ENCODE measurements at regions of chr19 and their contacts with region 1.

Region 1: DNA sequence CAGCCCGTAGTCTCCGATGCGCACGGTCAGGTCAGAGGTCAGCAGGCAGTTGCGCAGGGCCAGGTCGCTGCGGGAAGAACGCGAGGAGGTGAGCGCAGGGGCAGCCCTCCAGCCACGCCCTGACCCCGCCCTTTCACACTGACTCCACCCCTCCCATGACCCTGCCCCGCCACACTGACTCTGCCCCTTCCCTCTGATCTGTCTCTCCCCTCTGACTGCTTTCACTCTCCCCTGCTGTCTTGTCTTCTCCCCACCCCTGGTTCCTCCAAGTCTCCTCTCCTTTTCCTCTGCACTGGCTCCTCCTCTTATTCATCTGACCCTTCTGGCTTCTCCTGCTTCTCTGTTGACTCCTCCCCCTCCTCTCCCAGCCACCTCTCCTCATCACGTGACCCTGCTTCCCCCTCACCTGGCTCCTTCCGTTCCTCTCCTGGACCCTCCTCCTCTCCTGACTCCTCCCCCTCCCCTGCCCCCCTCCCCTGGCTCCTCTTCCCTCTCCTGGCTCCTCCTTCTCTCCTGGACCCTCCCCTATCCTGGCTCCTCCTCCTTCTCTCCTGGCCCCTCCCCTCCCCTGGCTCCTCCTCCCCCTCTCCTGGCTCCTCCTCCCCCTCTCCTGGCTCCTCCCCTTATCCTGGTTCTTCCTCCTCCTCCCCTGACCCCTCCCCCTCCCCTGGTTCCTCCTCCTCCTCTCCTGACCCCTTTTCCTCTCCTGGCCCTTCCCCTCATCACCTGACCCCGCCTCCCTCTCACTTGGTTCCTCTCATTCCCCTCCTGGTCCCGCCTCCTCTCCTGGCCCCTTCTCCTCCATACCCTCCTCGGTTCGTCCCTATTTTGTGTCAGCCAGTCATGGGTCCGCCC is 9.9 kb downstream of the LMTK3 start:
- DNase-seq: no peak
- ATAC-seq: peak; percentile 64
- H3K4me3 Mint-ChIP-seq: peak overlapping the region; percentile 65
- H3K27ac Mint-ChIP-seq: no peak overlapping the region
- H3K4me1 Mint-ChIP-seq: peaks cover 24% of the 10 kb centered on the region
- H3K27me3 Mint-ChIP-seq: peaks cover 15% of the 10 kb centered on the region
- CTCF ChIP-seq: no peak

Region 2: GRCh38 chr19:48513289-48514122 is 11.8 kb after region 1 on chr19:
- CTCF ChIA-PET with region 1: no interaction called
- POLR2A ChIA-PET with region 1: interaction called, 3 read pairs
- intact Hi-C with region 1: loop called (anchors 1 kb)
- DNase-seq: peak; percentile 51
- ATAC-seq: peak; percentile 90
- H3K4me3 Mint-ChIP-seq: no peak overlapping the region
- H3K27ac Mint-ChIP-seq: peak overlapping the region; percentile 69
- H3K4me1 Mint-ChIP-seq: peaks cover 17% of the 10 kb centered on the region
- H3K27me3 Mint-ChIP-seq: peaks cover 2% of the 10 kb centered on the region
- CTCF ChIP-seq: no peak

Region 3: GRCh38 chr19:48582168-48582567 is 80.4 kb after region 1 on chr19:
- CTCF ChIA-PET with region 1: interaction called, 24 read pairs
- POLR2A ChIA-PET with region 1: interaction called, 3 read pairs
- intact Hi-C with region 1: loop called (anchors 1 kb)
- DNase-seq: no peak
- ATAC-seq: no peak
- H3K4me3 Mint-ChIP-seq: no peak overlapping the region
- H3K27ac Mint-ChIP-seq: no peak overlapping the region
- H3K4me1 Mint-ChIP-seq: peaks cover 6% of the 10 kb centered on the region
- H3K27me3 Mint-ChIP-seq: peaks cover 2% of the 10 kb centered on the region
- CTCF ChIP-seq: no peak